Activated CD4-positive, alpha-beta T cell treated with anti-CD3 and anti-CD28 coated beads, Interleukin-2, amount 10 ng/mL, durations not matched to agents 24 days and 14 days (primary cell): ENCODE measurements at regions of chr11 and their contacts with region 1.

Region 1: DNA sequence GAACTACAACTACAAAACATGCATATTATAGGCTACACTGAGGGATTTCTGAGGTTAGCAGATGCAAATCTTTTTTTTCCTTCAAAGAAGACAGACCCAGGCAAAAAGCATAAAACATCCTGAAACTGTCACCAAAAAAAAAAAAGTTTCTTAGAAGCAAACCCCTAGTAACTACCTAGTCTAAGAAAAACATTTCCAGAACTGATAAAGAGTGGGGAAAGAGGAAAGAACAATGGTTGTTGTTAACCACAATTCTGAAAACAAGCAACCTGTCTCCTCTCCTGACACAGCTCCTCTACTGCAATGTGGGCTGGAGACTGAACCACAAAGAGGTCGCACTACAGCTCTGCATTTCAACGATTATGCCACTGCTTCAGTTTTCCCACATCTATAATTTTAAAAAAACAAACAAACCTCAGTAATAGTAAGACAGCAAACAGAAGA is 15.0 kb downstream of the DENND5A start:
- DNase-seq: peak; percentile 84
- H3K4me3 Mint-ChIP-seq: peak overlapping the region; percentile 71
- H3K27ac Mint-ChIP-seq: peak overlapping the region; percentile 84
- H3K4me1 Mint-ChIP-seq: peaks cover 42% of the 10 kb centered on the region
- H3K27me3 Mint-ChIP-seq: no peaks in the 10 kb centered on the region

Region 2: GRCh38 chr11:9158898-9159391 is 91.2 kb before region 1 on chr11:
- intact Hi-C with region 1: no loop called
- DNase-seq: no peak
- H3K4me3 Mint-ChIP-seq: no peak overlapping the region
- H3K27ac Mint-ChIP-seq: peak overlapping the region; percentile 4
- H3K4me1 Mint-ChIP-seq: peaks cover 16% of the 10 kb centered on the region
- H3K27me3 Mint-ChIP-seq: no peaks in the 10 kb centered on the region

Region 3: GRCh38 chr11:9187616-9188015 is 62.5 kb before region 1 on chr11:
- intact Hi-C with region 1: no loop called
- DNase-seq: no peak
- H3K4me3 Mint-ChIP-seq: no peak overlapping the region
- H3K27ac Mint-ChIP-seq: no peak overlapping the region
- H3K4me1 Mint-ChIP-seq: no peaks in the 10 kb centered on the region
- H3K27me3 Mint-ChIP-seq: no peaks in the 10 kb centered on the region

Region 4: DNA sequence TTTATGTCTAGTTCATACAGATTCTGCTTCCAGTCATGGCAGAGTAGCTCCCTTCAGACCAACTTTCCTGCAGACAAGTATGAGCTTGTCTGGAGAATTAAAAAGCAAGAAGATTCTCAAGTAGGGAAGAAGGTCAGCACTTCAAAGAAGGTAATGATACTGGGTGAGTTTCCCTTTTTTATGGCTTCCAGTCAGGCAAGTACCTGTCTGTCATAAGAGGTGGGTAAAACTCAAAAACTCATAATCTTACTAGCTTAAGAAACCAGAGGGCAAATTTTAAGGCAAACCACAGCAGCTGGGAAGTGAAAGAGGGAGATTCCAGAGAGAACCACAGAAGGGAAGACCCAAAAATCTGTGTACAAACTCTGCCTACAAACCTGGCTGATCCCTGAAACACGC is 39.2 kb before region 1 on chr11:
- intact Hi-C with region 1: loop called (anchors 1 kb)
- DNase-seq: peak; percentile 63
- H3K4me3 Mint-ChIP-seq: peak overlapping the region; percentile 53
- H3K27ac Mint-ChIP-seq: peak overlapping the region; percentile 76
- H3K4me1 Mint-ChIP-seq: peaks cover 54% of the 10 kb centered on the region
- H3K27me3 Mint-ChIP-seq: no peaks in the 10 kb centered on the region

Region 5: GRCh38 chr11:9231848-9232177 is 18.3 kb before region 1 on chr11:
- intact Hi-C with region 1: loop called (anchors 2 kb)
- DNase-seq: peak; percentile 76
- H3K4me3 Mint-ChIP-seq: peak overlapping the region; percentile 67
- H3K27ac Mint-ChIP-seq: peak overlapping the region; percentile 16
- H3K4me1 Mint-ChIP-seq: peaks cover 36% of the 10 kb centered on the region
- H3K27me3 Mint-ChIP-seq: no peaks in the 10 kb centered on the region

Region 6: DNA sequence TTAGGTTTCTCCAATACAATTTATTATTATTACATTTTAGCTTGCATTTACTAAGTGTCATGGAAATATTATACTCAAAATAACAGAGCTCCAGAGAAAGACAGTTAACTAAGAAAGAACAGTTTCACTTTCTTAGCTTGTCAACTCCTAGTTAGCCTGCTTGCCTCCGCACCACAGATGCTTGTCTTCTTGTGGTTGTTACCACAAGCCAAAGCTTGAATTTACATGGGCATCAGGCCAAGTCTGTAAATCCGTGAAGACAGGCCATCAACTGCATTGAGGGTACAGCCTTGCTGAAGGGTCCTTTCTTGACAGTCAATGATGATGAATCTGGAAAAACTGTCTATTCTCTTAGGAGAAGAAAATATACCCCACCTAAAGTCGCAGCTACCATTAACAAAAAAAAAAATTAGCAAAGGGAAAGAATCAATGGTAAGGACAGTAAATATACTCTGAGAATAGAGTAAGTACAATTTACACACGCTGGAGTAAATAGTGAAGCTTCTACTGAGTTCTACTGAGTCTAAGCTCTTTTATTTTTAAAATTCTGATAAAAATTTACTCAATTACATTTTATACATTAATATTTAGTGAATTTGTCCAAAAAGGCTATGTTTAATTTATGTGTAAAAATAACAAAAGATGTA is 30.6 kb after region 1 on chr11:
- intact Hi-C with region 1: loop called (anchors 1 kb)
- DNase-seq: peak; percentile 92
- H3K4me3 Mint-ChIP-seq: peak overlapping the region; percentile 70
- H3K27ac Mint-ChIP-seq: peak overlapping the region; percentile 31
- H3K4me1 Mint-ChIP-seq: peaks cover 12% of the 10 kb centered on the region
- H3K27me3 Mint-ChIP-seq: no peaks in the 10 kb centered on the region